Ovary (tissue), 10 donors: ENCODE measurements at regions of chr19 and their contacts with region 1.

Region 1: DNA sequence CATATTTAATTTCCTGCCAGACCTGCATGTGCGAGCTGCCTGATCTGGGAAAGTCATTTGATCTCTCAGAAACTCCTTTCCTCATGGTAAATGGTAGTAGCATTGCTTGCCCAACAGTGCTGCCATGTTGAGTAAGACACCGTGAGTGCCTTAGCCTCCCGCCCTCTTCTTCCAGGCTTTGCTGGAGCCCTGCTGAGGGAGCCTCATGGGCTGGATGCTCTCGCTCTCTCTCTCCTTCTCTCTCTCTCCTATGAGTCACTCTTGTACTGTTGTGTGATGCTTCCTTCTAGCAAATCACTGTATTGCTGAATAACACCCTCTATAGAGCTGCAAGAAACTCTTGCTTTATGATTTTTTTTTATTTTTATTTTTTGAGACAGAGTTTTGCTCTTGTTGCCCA is 365.5 kb downstream of the UQCRFS1 start:
- DNase-seq: no peak
- H3K4me3 ChIP-seq: no peak overlapping the region
- H3K27ac ChIP-seq: no peak overlapping the region
- H3K4me1 ChIP-seq: no peaks in the 10 kb centered on the region
- H3K27me3 ChIP-seq: no peaks in the 10 kb centered on the region
- CTCF ChIP-seq: no peak
- EP300 ChIP-seq: no peak
- POLR2A ChIP-seq: no peak

Region 2: GRCh38 chr19:28823338-28823961 is 24.0 kb before region 1 on chr19:
- intact Hi-C with region 1: loop called in 1 of 4 experiments (anchors 1 kb)
- DNase-seq: no peak
- H3K4me3 ChIP-seq: no peak overlapping the region
- H3K27ac ChIP-seq: no peak overlapping the region
- H3K4me1 ChIP-seq: no peaks in the 10 kb centered on the region
- H3K27me3 ChIP-seq: no peaks in the 10 kb centered on the region
- CTCF ChIP-seq: no peak
- EP300 ChIP-seq: no peak
- POLR2A ChIP-seq: no peak